ENCODE measurements at regions of chr2 and their contacts with region 1.

Region 1: GRCh38 chr2:176140513-176141317 is 10.6 kb upstream of the HOXD4 start:
- DNase-seq: peak; percentile 95
- CTCF ChIP-seq: peak; percentile 99

Region 2: DNA sequence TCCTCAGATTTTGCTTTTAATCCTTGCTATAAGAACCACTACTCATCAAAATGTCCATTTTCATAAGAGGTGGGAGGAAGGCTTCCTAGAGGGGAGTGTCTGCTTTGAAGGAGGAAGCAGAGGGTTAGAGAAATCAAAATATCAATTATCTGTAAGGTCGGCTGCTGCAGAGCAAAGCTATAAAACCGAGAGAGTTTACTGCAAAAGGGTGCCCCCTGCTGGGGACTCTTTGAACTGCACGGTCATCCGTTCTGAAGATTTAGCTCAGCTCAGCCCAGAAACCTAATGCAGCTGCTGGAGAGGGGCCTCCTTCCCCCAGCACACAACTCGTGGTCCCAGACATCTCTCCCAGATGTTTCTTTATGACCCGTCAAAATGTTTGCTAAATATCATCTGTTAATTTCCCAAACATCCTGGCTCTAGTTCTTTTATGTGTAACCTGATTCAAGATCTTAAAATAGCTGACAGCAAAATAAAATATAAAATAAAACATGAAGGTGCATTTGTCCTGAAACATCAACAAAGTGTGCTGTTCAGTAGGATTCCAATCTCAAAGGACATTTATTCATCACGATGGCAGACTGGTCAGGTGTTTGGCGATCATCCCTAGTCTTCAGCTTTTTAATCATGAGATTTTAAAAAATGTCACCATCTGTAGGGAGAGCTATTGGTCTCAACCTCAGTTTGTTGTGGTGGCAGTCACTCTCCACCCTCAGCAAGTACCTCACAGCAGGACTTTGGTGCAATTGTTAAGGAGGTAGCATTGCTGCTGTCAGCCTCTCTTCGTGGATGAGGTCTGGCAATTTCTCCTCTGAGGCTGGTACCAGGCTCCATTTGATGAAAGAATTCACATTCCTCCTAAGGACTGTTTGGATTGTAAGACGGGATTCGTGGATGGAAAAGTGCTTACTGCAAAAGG is 314.4 kb after region 1 on chr2:
- in situ Hi-C with region 1: loop called (anchors 10 kb)
- DNase-seq: peak; percentile 59
- CTCF ChIP-seq: peak; percentile 81

Region 3: DNA sequence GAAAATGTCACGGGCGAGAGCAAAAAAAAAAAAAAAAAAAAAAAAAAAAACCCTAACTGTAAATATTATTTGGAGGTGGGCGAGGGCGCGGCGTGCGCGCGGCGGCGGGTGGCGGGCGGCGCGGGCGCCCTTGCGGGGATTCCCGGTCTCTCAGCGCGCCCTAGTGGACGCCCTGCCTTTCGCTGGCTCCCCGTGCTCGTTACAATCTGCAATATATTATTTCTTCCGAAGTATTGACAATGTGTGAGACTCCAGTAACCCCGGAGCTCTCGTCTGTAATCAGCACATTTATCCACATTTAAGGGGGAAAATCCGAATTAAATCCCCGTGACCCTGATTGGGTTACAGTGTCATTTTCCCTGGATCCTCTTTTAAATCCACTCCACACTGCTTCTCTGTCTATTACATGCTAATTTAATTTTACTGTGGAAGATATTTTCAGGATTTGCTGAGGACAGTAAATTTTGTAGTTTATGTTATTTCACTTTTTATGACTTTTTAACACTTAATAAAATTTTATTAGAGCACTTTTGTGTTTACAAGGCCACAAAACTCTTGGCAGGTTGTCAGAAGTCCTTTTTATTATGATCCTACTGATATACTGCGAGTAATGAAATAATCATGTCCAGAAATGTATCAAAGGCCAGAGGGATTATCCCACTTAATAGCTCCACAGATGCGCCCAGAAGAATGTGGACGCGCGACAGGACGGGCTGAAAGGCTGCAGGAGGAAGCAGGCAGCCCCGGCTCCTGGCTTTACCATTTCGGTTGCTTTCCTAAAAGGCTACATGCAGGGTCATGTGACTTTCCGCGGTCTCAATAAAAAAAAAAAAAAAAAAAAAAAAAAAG is 497.7 kb after region 1 on chr2:
- in situ Hi-C with region 1: loop called (anchors 5 kb)
- DNase-seq: peak; percentile 88
- CTCF ChIP-seq: peak; percentile 85

Measured in GM13977 (cell line).